Heart right ventricle (tissue), 16 donors: ENCODE measurements at regions of chr14 and their contacts with region 1.

Region 1: DNA sequence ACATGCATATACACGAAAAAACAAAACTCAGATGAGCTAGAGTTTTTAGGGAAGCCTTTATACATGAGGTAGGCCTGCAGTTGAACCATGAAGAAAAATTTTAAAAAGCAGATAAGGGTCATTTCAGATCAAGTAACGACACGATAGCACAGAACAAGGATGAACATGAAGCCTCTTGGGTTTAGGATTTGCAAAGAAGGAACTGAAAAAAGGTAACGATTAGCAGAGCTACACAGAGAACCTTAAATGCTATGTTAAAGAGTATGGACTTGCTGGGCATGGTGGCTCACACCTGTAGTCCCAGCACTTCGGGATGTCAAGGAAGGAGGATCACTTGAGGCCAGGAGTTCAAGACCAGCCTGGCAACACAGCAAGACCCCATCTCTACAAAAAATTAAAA is 96.1 kb upstream of the HECTD1 start:
- DNase-seq: no peak
- ATAC-seq: no peak
- H3K4me3 ChIP-seq: no peak overlapping the region
- H3K27ac ChIP-seq: no peak overlapping the region
- H3K4me1 ChIP-seq: no peaks in the 10 kb centered on the region
- H3K27me3 ChIP-seq: no peaks in the 10 kb centered on the region
- CTCF ChIP-seq: no peak

Region 2: GRCh38 chr14:31263485-31264133 is 40.0 kb before region 1 on chr14:
- intact Hi-C with region 1: no loop called
- DNase-seq: peak in 1 of 2 donors; percentile 17
- ATAC-seq: peak; percentile 59 to 95 (median 87)
- H3K4me3 ChIP-seq: no peak overlapping the region
- H3K27ac ChIP-seq: peak overlapping the region in 3 of 10 donors; percentile 36 to 53 (median 49)
- H3K4me1 ChIP-seq: peaks cover 0 to 28% (median 24%) of the 10 kb centered on the region in 9 donors
- H3K27me3 ChIP-seq: no peaks in the 10 kb centered on the region
- CTCF ChIP-seq: no peak

Region 3: DNA sequence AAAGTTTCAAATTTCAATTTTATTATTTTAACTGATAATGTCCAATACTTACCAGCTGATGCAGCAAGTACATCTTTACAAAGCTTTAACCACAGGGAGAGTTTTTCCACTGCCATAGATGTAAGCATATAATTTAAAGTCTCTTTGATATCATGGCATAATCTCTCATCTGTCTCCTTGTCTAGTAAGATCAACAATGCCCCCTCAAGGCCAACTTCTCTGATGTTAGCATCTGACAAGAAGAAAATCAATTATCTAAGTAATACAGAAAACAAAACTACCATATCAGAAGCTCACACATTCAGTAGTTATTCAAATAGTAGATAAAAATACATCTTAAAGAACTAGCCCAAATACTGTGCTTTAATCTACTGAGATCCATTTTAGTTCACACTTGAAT is 22.5 kb after region 1 on chr14:
- intact Hi-C with region 1: loop called in 1 of 10 experiments (anchors 2 kb)
- DNase-seq: no peak
- ATAC-seq: no peak
- H3K4me3 ChIP-seq: no peak overlapping the region
- H3K27ac ChIP-seq: no peak overlapping the region
- H3K4me1 ChIP-seq: no peaks in the 10 kb centered on the region
- H3K27me3 ChIP-seq: no peaks in the 10 kb centered on the region
- CTCF ChIP-seq: no peak